PC-3 (cell line): ENCODE measurements at regions of chr12 and their contacts with region 1.

Region 1: DNA sequence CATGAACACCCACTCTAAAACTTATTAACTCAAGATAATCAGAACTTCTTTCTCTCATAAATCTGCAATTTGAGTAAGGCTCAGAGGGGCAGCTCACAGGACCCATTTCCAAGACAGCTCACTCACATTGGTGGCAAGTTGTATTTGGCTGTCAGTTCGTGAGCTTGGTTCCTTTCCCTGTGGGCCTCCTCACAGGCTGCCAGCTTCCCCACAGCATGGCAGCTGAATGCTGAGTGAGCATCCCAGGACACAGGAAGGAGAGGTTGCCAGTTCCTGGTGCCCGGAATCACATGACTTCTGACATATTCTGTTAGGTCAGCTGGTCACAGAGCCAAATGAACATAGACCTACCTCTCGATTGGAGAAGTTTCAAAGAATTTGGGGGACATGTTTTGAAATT is 116.6 kb upstream of the TMEM233 start:
- DNase-seq: no peak
- ATAC-seq: no peak
- H3K4me3 ChIP-seq: no peak overlapping the region
- H3K27ac ChIP-seq: no peak overlapping the region
- H3K4me1 ChIP-seq: no peaks in the 10 kb centered on the region
- H3K27me3 ChIP-seq: peaks cover 36% of the 10 kb centered on the region
- CTCF ChIP-seq: no peak

Region 2: DNA sequence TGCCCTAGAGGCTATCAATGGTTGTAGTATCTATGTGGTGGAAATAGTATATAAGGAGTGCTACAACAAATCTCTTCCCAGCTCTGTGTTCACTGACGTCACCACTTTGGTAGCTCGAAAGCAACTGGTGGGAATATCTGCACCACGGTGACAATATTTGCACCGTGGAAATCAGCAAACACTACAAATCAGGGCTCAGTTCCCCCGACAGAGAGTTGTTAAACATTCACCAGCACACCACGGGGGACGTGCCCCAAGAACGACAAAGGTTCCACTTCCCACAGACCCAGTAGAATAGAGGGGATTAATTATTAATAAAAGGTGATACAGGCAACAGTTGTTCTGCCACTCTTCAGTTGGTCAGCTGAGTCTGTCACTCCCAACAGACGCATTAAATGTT is 44.0 kb before region 1 on chr12:
- CTCF ChIA-PET with region 1: no interaction called
- POLR2A ChIA-PET with region 1: interaction called, 12 read pairs
- intact Hi-C with region 1: no loop called
- DNase-seq: no peak
- ATAC-seq: no peak
- H3K4me3 ChIP-seq: no peak overlapping the region
- H3K27ac ChIP-seq: no peak overlapping the region
- H3K4me1 ChIP-seq: no peaks in the 10 kb centered on the region
- H3K27me3 ChIP-seq: peaks cover 4% of the 10 kb centered on the region; the same call in 1 of the 2 replicates
- CTCF ChIP-seq: no peak

Region 3: GRCh38 chr12:119876761-119877638 is 400.0 kb after region 1 on chr12 and contains the start of gene CIT:
- CTCF ChIA-PET with region 1: no interaction called
- POLR2A ChIA-PET with region 1: no interaction called
- intact Hi-C with region 1: no loop called
- DNase-seq: peak; percentile 99
- ATAC-seq: peak; percentile 99
- H3K4me3 ChIP-seq: peak within 1 kb of the TSS; percentile 87
- H3K27ac ChIP-seq: peak within 1 kb of the TSS; percentile 32
- H3K4me1 ChIP-seq: peaks cover 14% of the 10 kb centered on the region
- H3K27me3 ChIP-seq: no peaks in the 10 kb centered on the region
- CTCF ChIP-seq: no peak
- total RNA-seq, gene CIT: 58.9 and 112 TPM in 2 replicates